Activated CD4-positive, alpha-beta T cell treated with anti-CD3 and anti-CD28 coated beads for 36 hours (primary cell): ENCODE measurements at regions of chr7 and their contacts with region 1.

Region 1: GRCh38 chr7:91034459-91035368 is 229.5 kb upstream of the FZD1 start:
- DNase-seq: peak; percentile 64
- ATAC-seq: no peak
- H3K4me3 Mint-ChIP-seq: no peak overlapping the region
- H3K27ac Mint-ChIP-seq: no peak overlapping the region
- H3K4me1 Mint-ChIP-seq: no peaks in the 10 kb centered on the region
- H3K27me3 Mint-ChIP-seq: no peaks in the 10 kb centered on the region

Region 2: DNA sequence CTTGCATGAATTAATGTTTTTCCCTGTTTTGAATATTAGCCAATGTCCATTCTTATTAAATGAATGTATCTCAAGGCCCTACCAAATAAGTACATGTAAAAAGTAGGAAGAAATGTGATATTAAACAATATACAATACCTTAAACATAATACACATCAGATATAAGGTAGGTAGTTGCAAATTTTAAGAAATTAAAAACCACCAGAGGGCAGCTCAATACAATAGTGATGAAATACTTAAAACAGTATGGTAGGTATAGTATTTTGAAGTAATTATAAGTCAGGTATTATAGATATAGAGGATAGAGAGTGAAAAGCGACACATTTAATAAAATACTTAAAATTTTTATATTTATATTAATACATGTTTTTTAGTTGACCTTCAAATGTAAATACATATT is 482.2 kb before region 1 on chr7:
- CTCF ChIA-PET with region 1: interaction called, 4 read pairs
- POLR2A ChIA-PET with region 1: no interaction called
- intact Hi-C with region 1: loop called in 1 of 2 experiments (anchors 10 kb)
- DNase-seq: no peak
- ATAC-seq: no peak
- H3K4me3 Mint-ChIP-seq: no peak overlapping the region
- H3K27ac Mint-ChIP-seq: no peak overlapping the region
- H3K4me1 Mint-ChIP-seq: no peaks in the 10 kb centered on the region
- H3K27me3 Mint-ChIP-seq: peaks cover 5% of the 10 kb centered on the region

Region 3: DNA sequence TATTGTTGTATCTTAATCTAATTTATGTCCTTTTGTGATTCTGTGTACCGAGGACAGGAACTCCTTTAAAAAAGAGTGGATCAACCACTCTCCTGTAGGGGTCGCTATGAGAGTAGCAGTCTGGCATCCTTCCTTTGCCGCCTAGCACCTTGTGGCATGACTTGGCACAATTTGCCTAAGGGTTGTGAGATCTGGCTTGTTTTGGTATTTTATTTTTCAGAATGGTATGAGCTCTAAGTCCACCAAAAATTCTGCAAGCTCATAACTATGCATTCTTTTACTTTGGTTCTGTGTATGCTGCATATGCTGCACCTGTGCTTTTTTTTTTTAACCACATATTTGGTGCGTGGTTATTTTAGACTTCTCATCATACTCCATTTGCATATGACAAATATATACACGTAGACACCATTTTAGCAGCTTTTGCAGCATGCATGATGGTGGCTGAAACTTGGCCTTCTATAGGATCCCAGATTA is 325.8 kb before region 1 on chr7:
- CTCF ChIA-PET with region 1: interaction called, 3 read pairs
- POLR2A ChIA-PET with region 1: no interaction called
- intact Hi-C with region 1: loop called (anchors 1 to 10 kb)
- DNase-seq: peak; percentile 44
- ATAC-seq: peak; percentile 39
- H3K4me3 Mint-ChIP-seq: no peak overlapping the region
- H3K27ac Mint-ChIP-seq: no peak overlapping the region
- H3K4me1 Mint-ChIP-seq: no peaks in the 10 kb centered on the region
- H3K27me3 Mint-ChIP-seq: no peaks in the 10 kb centered on the region

Region 4: DNA sequence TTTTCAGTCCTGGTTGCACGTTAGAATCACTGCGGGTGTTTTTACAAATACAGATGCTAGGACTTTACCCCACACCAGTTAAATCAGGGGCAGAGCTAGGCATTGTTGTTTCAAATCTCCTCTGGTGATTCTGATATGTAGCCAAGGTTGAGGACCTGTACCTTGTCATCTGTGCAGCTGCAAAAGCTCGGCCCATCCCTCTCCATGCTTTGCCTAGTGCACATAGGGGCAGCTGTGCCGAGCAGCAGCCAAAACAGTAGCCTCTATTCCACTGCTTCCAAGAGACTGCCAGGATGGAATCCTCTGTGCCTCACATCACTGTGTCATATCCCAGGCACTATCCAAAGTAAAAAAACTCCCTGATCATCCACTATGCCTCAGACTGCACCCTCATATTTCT is 257.2 kb before region 1 on chr7:
- CTCF ChIA-PET with region 1: no interaction called
- POLR2A ChIA-PET with region 1: no interaction called
- intact Hi-C with region 1: no loop called
- DNase-seq: no peak
- ATAC-seq: no peak
- H3K4me3 Mint-ChIP-seq: no peak overlapping the region
- H3K27ac Mint-ChIP-seq: no peak overlapping the region
- H3K4me1 Mint-ChIP-seq: no peaks in the 10 kb centered on the region
- H3K27me3 Mint-ChIP-seq: no peaks in the 10 kb centered on the region